ENCODE measurements at regions of chr12 and their contacts with region 1.

Region 1: GRCh38 chr12:123329799-123330198 is 34.8 kb downstream of the SBNO1 start:
- DNase-seq: no peak
- ATAC-seq: no peak
- H3K4me3 ChIP-seq: no peak overlapping the region
- H3K27ac ChIP-seq: no peak overlapping the region
- H3K4me1 ChIP-seq: no peaks in the 10 kb centered on the region
- H3K27me3 ChIP-seq: no peaks in the 10 kb centered on the region
- CTCF ChIP-seq: no peak

Region 2: GRCh38 chr12:122517877-122518276 is 811.9 kb before region 1 on chr12:
- intact Hi-C with region 1: loop called in 1 of 2 experiments (anchors 10 kb)
- DNase-seq: no peak
- ATAC-seq: peak; percentile 57 to 76 (median 70)
- H3K4me3 ChIP-seq: no peak overlapping the region
- H3K27ac ChIP-seq: peak overlapping the region; percentile 46
- H3K4me1 ChIP-seq: peaks cover 21% of the 10 kb centered on the region
- H3K27me3 ChIP-seq: no peaks in the 10 kb centered on the region
- CTCF ChIP-seq: no peak

Region 3: DNA sequence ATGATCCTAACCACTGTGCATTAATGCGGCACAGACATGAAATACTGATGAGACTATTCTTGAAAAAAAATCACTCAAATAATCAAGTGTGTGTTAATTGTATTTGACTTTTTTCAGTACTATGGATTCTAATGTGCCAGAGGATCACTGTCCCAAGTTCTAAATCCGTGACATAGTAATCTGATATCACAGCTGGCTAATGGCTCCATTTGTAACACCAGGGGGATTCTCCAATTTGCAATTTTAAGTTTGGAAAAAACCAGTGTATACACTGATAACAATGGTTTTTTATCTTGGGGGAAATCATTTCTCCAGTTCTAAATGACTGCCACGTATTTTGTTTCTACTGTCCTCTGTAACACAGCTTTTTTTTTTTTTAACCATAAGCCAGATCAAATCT is 129.9 kb before region 1 on chr12:
- intact Hi-C with region 1: loop called in 1 of 2 experiments (anchors 10 kb)
- DNase-seq: no peak
- ATAC-seq: no peak
- H3K4me3 ChIP-seq: no peak overlapping the region
- H3K27ac ChIP-seq: no peak overlapping the region
- H3K4me1 ChIP-seq: no peaks in the 10 kb centered on the region
- H3K27me3 ChIP-seq: no peaks in the 10 kb centered on the region
- CTCF ChIP-seq: no peak

Region 4: DNA sequence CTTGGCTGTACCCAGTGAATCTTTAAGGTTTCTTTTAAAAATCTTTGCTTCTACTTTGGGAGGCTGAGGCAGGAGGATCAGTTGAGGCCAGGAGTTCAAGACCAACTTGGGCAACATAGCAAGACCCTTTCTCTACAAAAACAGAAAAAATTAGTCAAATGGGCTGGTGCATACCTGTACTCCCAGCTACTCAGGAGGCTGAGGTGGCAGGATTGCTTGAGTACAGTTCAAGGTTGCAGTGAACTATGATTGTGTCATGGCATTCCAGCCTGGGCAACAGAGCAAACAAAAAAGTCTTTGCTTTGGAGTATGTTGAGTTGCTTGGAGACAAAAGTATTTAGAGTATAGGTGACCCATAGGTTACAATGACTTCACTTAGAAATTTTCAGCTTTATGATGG is 265.9 kb after region 1 on chr12:
- intact Hi-C with region 1: loop called in 1 of 2 experiments (anchors 5 kb)
- DNase-seq: no peak
- ATAC-seq: no peak
- H3K4me3 ChIP-seq: no peak overlapping the region
- H3K27ac ChIP-seq: no peak overlapping the region
- H3K4me1 ChIP-seq: no peaks in the 10 kb centered on the region
- H3K27me3 ChIP-seq: no peaks in the 10 kb centered on the region
- CTCF ChIP-seq: no peak